Mammary epithelial cell (primary cell): ENCODE measurements at regions of chr16 and their contacts with region 1.

Region 1: GRCh38 chr16:87461466-87461991 is 31.3 kb downstream of the ZCCHC14 start:
- DNase-seq: peak; percentile 93
- H3K4me3 ChIP-seq: peak overlapping the region; percentile 16 to 47 (median 29)
- H3K27ac ChIP-seq: no peak overlapping the region
- H3K4me1 ChIP-seq: peaks cover 45% of the 10 kb centered on the region
- H3K27me3 ChIP-seq: no peaks in the 10 kb centered on the region
- CTCF ChIP-seq: peak; percentile 63 to 76

Region 2: DNA sequence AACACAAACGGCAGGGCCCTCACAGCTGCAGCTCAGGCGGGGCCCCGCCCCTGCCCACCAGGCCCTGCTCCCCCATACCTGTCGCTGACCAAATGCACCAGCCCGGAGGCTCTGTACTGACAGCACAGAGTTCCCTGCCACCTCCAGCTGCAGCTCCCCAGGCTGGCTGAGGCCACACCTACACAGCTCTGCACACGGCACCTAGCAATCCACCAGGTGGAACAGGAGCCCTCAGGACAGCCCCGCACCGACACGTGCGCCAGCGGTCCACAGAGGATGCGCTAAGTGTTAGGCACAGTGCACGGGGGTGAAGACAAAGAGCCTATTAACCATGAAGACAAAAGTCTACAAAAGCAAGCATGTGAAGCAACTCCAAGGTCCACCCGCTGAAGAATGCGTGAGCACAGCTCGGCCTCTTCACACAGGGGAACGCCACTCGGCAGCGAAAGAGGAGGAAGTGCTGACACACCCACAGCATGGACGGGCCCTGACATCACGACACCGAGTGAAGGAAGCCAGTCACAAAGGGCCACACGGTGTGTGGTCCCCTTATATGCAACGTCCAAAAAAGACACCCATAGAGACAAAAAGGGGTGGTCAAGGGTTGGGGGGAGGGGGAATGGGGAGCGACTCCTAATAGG is 26.0 kb after region 1 on chr16:
- CTCF ChIA-PET with region 1: no interaction called
- dilution Hi-C with region 1: no loop called
- in situ Hi-C with region 1: no loop called
- intact Hi-C with region 1: loop called (anchors 1 kb)
- DNase-seq: peak; percentile 88
- H3K4me3 ChIP-seq: peak overlapping the region; percentile 15 to 49 (median 40)
- H3K27ac ChIP-seq: peak overlapping the region; percentile 32
- H3K4me1 ChIP-seq: peaks cover 65% of the 10 kb centered on the region
- H3K27me3 ChIP-seq: no peaks in the 10 kb centered on the region
- CTCF ChIP-seq: no peak

Region 3: DNA sequence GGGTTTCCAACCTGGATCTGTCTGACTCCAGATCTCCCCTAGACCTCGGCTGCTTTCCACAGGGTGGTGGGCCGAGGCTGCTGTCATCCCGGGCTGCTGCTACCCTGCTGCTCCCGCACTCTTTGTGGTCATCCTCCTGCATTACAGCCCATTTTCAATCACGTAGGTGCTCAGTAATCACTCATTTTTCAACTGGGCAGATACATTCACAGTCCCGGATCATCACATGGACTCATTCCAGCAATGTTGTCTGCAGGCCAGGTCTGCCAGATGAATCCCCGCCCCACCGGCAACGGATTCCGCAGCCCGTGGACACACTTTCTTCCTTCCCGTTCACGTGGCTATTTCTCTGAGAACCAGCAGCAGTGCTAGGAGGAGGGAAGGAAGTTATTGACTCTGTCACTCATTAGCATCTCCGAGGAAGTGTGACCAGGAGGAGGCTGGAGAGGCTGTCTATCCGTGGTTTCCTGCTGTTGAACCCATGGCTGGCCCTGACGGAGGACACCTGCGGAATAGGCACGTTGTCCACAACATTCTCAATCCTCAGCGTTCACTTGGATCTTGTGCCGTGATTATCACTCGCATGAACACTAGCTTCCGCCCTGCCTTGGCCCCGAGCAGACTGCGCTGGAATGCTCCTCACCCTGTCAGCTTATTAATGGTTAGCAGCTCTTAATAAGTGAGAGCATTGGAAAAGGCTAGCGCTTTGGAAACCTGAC is 46.0 kb after region 1 on chr16:
- CTCF ChIA-PET with region 1: no interaction called
- dilution Hi-C with region 1: loop called (anchors 5 kb)
- in situ Hi-C with region 1: no loop called
- intact Hi-C with region 1: no loop called
- DNase-seq: no peak
- H3K4me3 ChIP-seq: no peak overlapping the region
- H3K27ac ChIP-seq: no peak overlapping the region
- H3K4me1 ChIP-seq: no peaks in the 10 kb centered on the region
- H3K27me3 ChIP-seq: no peaks in the 10 kb centered on the region
- CTCF ChIP-seq: no peak

Region 4: GRCh38 chr16:87540945-87541877 is 79.7 kb after region 1 on chr16:
- CTCF ChIA-PET with region 1: no interaction called
- dilution Hi-C with region 1: loop called (anchors 5 kb)
- in situ Hi-C with region 1: no loop called
- intact Hi-C with region 1: no loop called
- DNase-seq: no peak
- H3K4me3 ChIP-seq: no peak overlapping the region
- H3K27ac ChIP-seq: no peak overlapping the region
- H3K4me1 ChIP-seq: no peaks in the 10 kb centered on the region
- H3K27me3 ChIP-seq: peaks cover 5% of the 10 kb centered on the region
- CTCF ChIP-seq: no peak

Region 5: DNA sequence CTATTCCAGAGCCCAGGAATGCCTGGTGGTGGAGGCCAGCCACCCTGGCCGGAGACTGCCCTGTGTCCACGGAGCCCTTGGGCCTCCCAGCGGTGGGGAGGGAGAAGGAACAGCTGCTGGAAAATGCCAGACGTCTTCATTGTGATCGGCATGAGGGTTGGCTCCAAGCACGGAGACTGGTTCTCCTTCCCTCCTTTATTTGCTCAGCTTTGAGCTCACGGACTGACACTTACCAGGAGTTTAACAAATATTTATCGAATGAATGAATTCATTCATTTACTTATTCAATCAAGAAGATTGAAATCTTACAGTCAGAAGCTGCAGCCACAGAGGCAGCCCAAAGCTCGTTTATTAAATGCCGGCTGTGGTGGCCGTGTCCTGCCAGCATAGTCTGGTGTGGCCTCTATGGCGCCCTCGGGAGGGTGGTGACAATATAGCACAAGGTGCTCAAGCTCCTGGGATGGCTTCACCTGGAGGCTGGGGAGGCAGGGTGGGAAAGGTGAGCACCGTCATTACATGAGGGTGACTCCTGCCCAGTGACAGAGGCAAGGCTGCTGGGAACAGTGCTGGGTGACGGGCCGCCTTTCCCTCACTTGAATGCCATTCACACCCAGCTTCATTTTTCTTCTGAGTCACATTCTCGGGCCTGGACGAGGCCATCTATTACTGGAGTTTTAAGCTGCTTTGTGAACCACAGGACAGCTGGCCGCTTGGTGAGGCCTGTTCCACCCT is 109.8 kb after region 1 on chr16:
- CTCF ChIA-PET with region 1: no interaction called
- dilution Hi-C with region 1: no loop called
- in situ Hi-C with region 1: no loop called
- intact Hi-C with region 1: loop called (anchors 1 kb)
- DNase-seq: no peak
- H3K4me3 ChIP-seq: no peak overlapping the region
- H3K27ac ChIP-seq: no peak overlapping the region
- H3K4me1 ChIP-seq: no peaks in the 10 kb centered on the region
- H3K27me3 ChIP-seq: peaks cover 5% of the 10 kb centered on the region
- CTCF ChIP-seq: peak in 1 of 2 donors; percentile 60

Region 6: GRCh38 chr16:88569985-88570690 is 1108.6 kb after region 1 on chr16 and contains the start of gene ZC3H18:
- CTCF ChIA-PET with region 1: no interaction called
- dilution Hi-C with region 1: no loop called
- in situ Hi-C with region 1: no loop called
- intact Hi-C with region 1: loop called (anchors 10 kb)
- DNase-seq: peak; percentile 96
- H3K4me3 ChIP-seq: peak within 1 kb of the TSS; percentile 93 to 99 (median 99)
- H3K27ac ChIP-seq: peak within 1 kb of the TSS; percentile 41
- H3K4me1 ChIP-seq: peaks cover 23% of the 10 kb centered on the region
- H3K27me3 ChIP-seq: no peaks in the 10 kb centered on the region
- CTCF ChIP-seq: no peak
- total RNA-seq, gene ZC3H18: 9.0 to 48.2 TPM